IMR-90 (cell line): ENCODE measurements at regions of chr21 and their contacts with region 1.

Region 1: GRCh38 chr21:31720330-31720729 is 11.6 kb downstream of the SCAF4 start:
- DNase-seq: no peak
- ATAC-seq: no peak
- H3K4me3 ChIP-seq: no peak overlapping the region
- H3K27ac ChIP-seq: no peak overlapping the region
- H3K4me1 ChIP-seq: no peaks in the 10 kb centered on the region
- H3K27me3 ChIP-seq: no peaks in the 10 kb centered on the region
- CTCF ChIP-seq: no peak
- POLR2A ChIP-seq: no peak
- RAD21 ChIP-seq: no peak

Region 2: GRCh38 chr21:31665397-31665796 is 54.9 kb before region 1 on chr21:
- CTCF ChIA-PET with region 1: no interaction called
- POLR2A ChIA-PET with region 1: no interaction called
- dilution Hi-C with region 1: no loop called
- in situ Hi-C with region 1: no loop called
- intact Hi-C with region 1: loop called (anchors 5 kb)
- DNase-seq: peak; percentile 54
- ATAC-seq: peak; percentile 44
- H3K4me3 ChIP-seq: no peak overlapping the region
- H3K27ac ChIP-seq: no peak overlapping the region
- H3K4me1 ChIP-seq: peaks cover 5% of the 10 kb centered on the region
- H3K27me3 ChIP-seq: no peaks in the 10 kb centered on the region
- CTCF ChIP-seq: no peak
- POLR2A ChIP-seq: no peak
- RAD21 ChIP-seq: no peak

Region 3: GRCh38 chr21:31750843-31751242 is 30.5 kb after region 1 on chr21:
- CTCF ChIA-PET with region 1: no interaction called
- POLR2A ChIA-PET with region 1: no interaction called
- dilution Hi-C with region 1: no loop called
- in situ Hi-C with region 1: no loop called
- intact Hi-C with region 1: no loop called
- DNase-seq: peak; percentile 56
- ATAC-seq: peak; percentile 49; the same call in 1 of the 2 replicates
- H3K4me3 ChIP-seq: no peak overlapping the region
- H3K27ac ChIP-seq: no peak overlapping the region
- H3K4me1 ChIP-seq: no peaks in the 10 kb centered on the region
- H3K27me3 ChIP-seq: no peaks in the 10 kb centered on the region; the same call in 1 of the 2 replicates
- CTCF ChIP-seq: no peak
- POLR2A ChIP-seq: no peak
- RAD21 ChIP-seq: no peak